CD4-positive, alpha-beta T cell (primary cell): ENCODE measurements at regions of chr15 and their contacts with region 1.

Region 1: DNA sequence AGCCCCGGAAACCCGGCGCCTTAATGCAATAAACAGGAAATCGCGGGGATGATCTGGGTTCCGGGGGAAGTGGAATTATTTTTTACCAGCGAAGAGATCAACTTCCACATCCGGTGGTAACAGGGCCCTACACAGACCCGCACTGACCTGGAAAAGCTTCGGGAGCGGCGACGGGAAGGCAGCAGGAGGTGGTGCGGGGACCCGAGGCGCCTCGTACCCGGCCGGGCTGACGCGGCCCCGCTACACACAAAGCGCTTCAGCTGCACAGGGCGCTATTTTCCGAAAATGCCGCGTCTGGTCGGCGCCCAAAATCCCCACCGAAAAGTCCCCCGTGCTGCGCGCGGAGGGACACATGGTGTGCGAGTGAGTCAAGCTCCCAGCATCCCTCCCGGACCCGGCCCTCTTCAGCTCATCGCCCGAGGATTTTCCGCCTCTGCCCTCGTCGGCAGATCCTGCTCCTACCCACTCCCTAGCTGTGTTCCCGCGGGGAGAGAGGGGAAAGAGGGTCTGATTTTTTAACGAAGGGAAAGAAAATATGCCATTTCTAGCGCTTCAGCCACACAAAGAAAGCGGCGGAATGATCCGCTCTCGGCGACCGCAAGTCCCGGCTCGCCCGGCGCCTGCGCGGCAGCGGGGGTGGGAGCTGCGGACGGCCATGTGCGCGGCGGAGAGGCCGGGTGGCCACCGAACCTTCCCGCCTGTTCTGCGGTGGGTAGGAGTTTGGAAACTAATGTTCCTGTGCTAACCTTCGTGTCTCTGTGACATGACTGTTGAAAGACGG is at the start of gene GABPB1:
- DNase-seq: peak; percentile 71 to 95 (median 84)
- ATAC-seq: peak; percentile 44
- H3K4me3 ChIP-seq: peak within 1 kb of the TSS; percentile 97
- H3K4me3 Mint-ChIP-seq: peak within 1 kb of the TSS; percentile 97
- H3K27ac ChIP-seq: peak within 1 kb of the TSS; percentile 99 to 100
- H3K27ac Mint-ChIP-seq: peak within 1 kb of the TSS; percentile 100
- H3K4me1 ChIP-seq: peaks cover 37% of the 10 kb centered on the region
- H3K4me1 Mint-ChIP-seq: peaks cover 73% of the 10 kb centered on the region
- H3K27me3 ChIP-seq: no peaks in the 10 kb centered on the region
- H3K27me3 Mint-ChIP-seq: peaks cover 19% of the 10 kb centered on the region
- CTCF ChIP-seq: no peak
- total RNA-seq, gene GABPB1: 25.7 to 27.1 TPM

Region 2: GRCh38 chr15:48810414-48811317 is 1544.4 kb before region 1 on chr15 and contains the start of gene CEP152:
- CTCF ChIA-PET with region 1: no interaction called
- POLR2A ChIA-PET with region 1: interaction called, 20 read pairs
- intact Hi-C with region 1: loop called in 1 of 2 experiments (anchors 10 kb)
- DNase-seq: peak; percentile 95 to 99 (median 98)
- ATAC-seq: peak; percentile 96
- H3K4me3 ChIP-seq: peak within 1 kb of the TSS; percentile 95
- H3K4me3 Mint-ChIP-seq: peak within 1 kb of the TSS; percentile 85
- H3K27ac ChIP-seq: peak within 1 kb of the TSS in 1 of 2 donors; percentile 43
- H3K27ac Mint-ChIP-seq: peak within 1 kb of the TSS; percentile 74
- H3K4me1 ChIP-seq: peaks cover 17% of the 10 kb centered on the region
- H3K4me1 Mint-ChIP-seq: peaks cover 41% of the 10 kb centered on the region
- H3K27me3 ChIP-seq: no peaks in the 10 kb centered on the region
- H3K27me3 Mint-ChIP-seq: no peaks in the 10 kb centered on the region
- CTCF ChIP-seq: no peak
- total RNA-seq, gene CEP152: 5.2 to 6.3 TPM

Region 3: GRCh38 chr15:49155110-49155833 is 1199.8 kb before region 1 on chr15 and contains the start of gene COPS2:
- CTCF ChIA-PET with region 1: no interaction called
- POLR2A ChIA-PET with region 1: interaction called, 31 read pairs
- intact Hi-C with region 1: loop called in 1 of 2 experiments (anchors 5 kb)
- DNase-seq: peak; percentile 84 to 97 (median 89)
- ATAC-seq: peak; percentile 94
- H3K4me3 ChIP-seq: peak within 1 kb of the TSS; percentile 89
- H3K4me3 Mint-ChIP-seq: peak within 1 kb of the TSS; percentile 98
- H3K27ac ChIP-seq: peak within 1 kb of the TSS; percentile 82 to 89
- H3K27ac Mint-ChIP-seq: peak within 1 kb of the TSS; percentile 95
- H3K4me1 ChIP-seq: peaks cover 14% of the 10 kb centered on the region
- H3K4me1 Mint-ChIP-seq: peaks cover 68% of the 10 kb centered on the region
- H3K27me3 ChIP-seq: no peaks in the 10 kb centered on the region
- H3K27me3 Mint-ChIP-seq: no peaks in the 10 kb centered on the region
- CTCF ChIP-seq: no peak
- total RNA-seq, gene COPS2: 131 to 136 TPM

Region 4: GRCh38 chr15:50315814-50316630 is 39.0 kb before region 1 on chr15:
- CTCF ChIA-PET with region 1: interaction called, 10 read pairs
- POLR2A ChIA-PET with region 1: interaction called, 31 read pairs
- intact Hi-C with region 1: loop called (anchors 5 kb)
- DNase-seq: peak in 3 of 14 experiments; percentile 63 to 69 (median 65)
- ATAC-seq: peak; percentile 49
- H3K4me3 ChIP-seq: no peak overlapping the region
- H3K4me3 Mint-ChIP-seq: no peak overlapping the region
- H3K27ac ChIP-seq: no peak overlapping the region
- H3K27ac Mint-ChIP-seq: no peak overlapping the region
- H3K4me1 ChIP-seq: no peaks in the 10 kb centered on the region
- H3K4me1 Mint-ChIP-seq: peaks cover 29% of the 10 kb centered on the region
- H3K27me3 ChIP-seq: no peaks in the 10 kb centered on the region
- H3K27me3 Mint-ChIP-seq: no peaks in the 10 kb centered on the region
- CTCF ChIP-seq: peak; percentile 83

Region 5: GRCh38 chr15:50424066-50424890 is 69.2 kb after region 1 on chr15 and contains the start of gene USP8:
- CTCF ChIA-PET with region 1: interaction called, 4 read pairs
- POLR2A ChIA-PET with region 1: interaction called, 132 read pairs
- intact Hi-C with region 1: loop called (anchors 1 kb)
- DNase-seq: peak; percentile 84 to 96 (median 89)
- ATAC-seq: peak; percentile 97
- H3K4me3 ChIP-seq: peak within 1 kb of the TSS; percentile 87
- H3K4me3 Mint-ChIP-seq: peak within 1 kb of the TSS; percentile 97
- H3K27ac ChIP-seq: peak within 1 kb of the TSS; percentile 86 to 96
- H3K27ac Mint-ChIP-seq: peak within 1 kb of the TSS; percentile 93
- H3K4me1 ChIP-seq: peaks cover 34% of the 10 kb centered on the region
- H3K4me1 Mint-ChIP-seq: peaks cover 45% of the 10 kb centered on the region
- H3K27me3 ChIP-seq: no peaks in the 10 kb centered on the region
- H3K27me3 Mint-ChIP-seq: no peaks in the 10 kb centered on the region
- CTCF ChIP-seq: no peak
- total RNA-seq, gene USP8: 48.9 to 50.0 TPM

Region 6: DNA sequence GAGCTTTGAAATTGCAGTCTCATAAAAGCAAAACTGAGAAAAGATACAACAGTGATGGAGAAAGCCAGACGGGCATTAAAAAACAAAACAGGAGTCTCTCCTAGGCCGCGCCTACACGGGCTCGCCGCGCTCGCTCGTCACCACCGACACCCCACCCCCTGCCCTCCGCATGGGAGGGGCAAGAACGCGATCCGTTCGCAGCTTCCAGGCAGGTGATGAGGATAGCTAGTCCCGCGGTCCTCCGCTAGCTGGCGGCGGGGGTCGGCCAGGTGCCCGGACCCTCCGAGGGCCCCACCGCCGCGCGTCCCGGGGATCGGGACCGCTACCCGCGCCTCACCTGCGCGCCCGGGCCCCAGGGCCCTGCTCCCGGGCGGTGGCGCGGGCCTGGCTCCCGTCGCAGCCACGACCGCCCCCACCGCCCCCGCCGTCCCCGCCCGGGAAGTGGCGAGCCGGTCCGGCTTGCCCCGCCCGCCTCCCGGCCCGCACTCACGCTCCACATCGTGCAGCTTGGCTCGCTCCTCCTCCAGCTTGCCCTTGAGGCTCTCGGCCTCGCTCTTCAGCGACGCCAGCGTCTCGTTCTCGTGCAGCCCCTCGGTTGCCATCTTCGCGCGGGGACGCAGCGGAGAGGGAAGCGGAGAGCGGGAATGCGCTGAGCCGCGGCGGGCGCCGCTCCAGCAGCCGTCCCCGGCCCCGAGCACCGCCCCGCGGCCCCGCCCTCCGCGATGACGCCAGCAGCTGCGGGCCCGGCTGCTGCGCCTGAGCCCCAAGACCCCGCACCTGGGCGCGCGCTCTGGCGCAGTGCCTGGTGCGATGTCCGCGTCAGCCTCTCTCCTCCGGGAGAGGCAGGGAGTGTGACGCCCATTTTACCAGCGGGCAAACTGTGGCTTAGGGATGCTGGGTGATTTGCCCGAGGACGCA is 1824.5 kb after region 1 on chr15:
- CTCF ChIA-PET with region 1: no interaction called
- POLR2A ChIA-PET with region 1: interaction called, 11 read pairs
- intact Hi-C with region 1: no loop called
- DNase-seq: peak; percentile 77 to 94 (median 88)
- ATAC-seq: peak; percentile 82
- H3K4me3 ChIP-seq: peak overlapping the region; percentile 79
- H3K4me3 Mint-ChIP-seq: peak overlapping the region; percentile 99
- H3K27ac ChIP-seq: peak overlapping the region; percentile 89 to 95
- H3K27ac Mint-ChIP-seq: peak overlapping the region; percentile 94
- H3K4me1 ChIP-seq: peaks cover 28% of the 10 kb centered on the region
- H3K4me1 Mint-ChIP-seq: peaks cover 47% of the 10 kb centered on the region
- H3K27me3 ChIP-seq: no peaks in the 10 kb centered on the region
- H3K27me3 Mint-ChIP-seq: no peaks in the 10 kb centered on the region
- CTCF ChIP-seq: no peak